Naive thymus-derived CD4-positive, alpha-beta T cell (primary cell): ENCODE measurements at regions of chr9 and their contacts with region 1.

Region 1: GRCh38 chr9:126939821-126940221 is 25.2 kb downstream of the RALGPS1 start:
- DNase-seq: no peak
- ATAC-seq: no peak
- H3K4me3 ChIP-seq: no peak overlapping the region
- H3K4me3 Mint-ChIP-seq: no peak overlapping the region
- H3K27ac ChIP-seq: no peak overlapping the region
- H3K27ac Mint-ChIP-seq: no peak overlapping the region
- H3K4me1 ChIP-seq: no peaks in the 10 kb centered on the region
- H3K4me1 Mint-ChIP-seq: peaks cover 4 to 7% (median 5%) of the 10 kb centered on the region in 7 donors
- H3K27me3 ChIP-seq: no peaks in the 10 kb centered on the region
- H3K27me3 Mint-ChIP-seq: peaks cover 0 to 39% (median 22%) of the 10 kb centered on the region in 5 donors

Region 2: DNA sequence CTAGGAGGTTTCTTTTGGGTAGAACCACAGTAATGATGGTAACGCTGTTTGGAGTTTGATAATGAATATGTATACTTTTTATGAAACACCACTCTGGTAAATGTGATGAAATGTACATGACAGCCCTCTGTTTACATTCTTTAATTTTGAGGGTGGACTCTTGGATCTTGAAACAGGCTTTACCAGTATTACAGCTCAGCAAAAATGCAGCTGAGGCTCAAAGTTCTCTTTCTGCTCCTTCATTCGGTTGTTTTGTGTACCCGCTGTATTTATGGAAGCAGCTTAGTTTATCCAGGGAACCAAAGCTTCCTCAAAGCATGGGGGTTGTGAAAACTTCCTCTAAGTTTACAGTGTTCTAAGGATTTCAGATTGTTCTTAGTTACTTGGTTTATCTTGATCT is 1667.1 kb before region 1 on chr9:
- CTCF ChIA-PET with region 1: no interaction called
- POLR2A ChIA-PET with region 1: no interaction called
- intact Hi-C with region 1: no loop called
- DNase-seq: no peak
- ATAC-seq: no peak
- H3K4me3 ChIP-seq: no peak overlapping the region
- H3K4me3 Mint-ChIP-seq: peak overlapping the region in 3 of 10 donors; percentile 2 to 30 (median 25)
- H3K27ac ChIP-seq: no peak overlapping the region
- H3K27ac Mint-ChIP-seq: peak overlapping the region in 1 of 9 donors; percentile 20
- H3K4me1 ChIP-seq: peaks cover 0 to 6% of the 10 kb centered on the region in 2 donors
- H3K4me1 Mint-ChIP-seq: peaks cover 15 to 56% (median 44%) of the 10 kb centered on the region in 7 donors
- H3K27me3 ChIP-seq: no peaks in the 10 kb centered on the region
- H3K27me3 Mint-ChIP-seq: no peaks in the 10 kb centered on the region

Region 3: DNA sequence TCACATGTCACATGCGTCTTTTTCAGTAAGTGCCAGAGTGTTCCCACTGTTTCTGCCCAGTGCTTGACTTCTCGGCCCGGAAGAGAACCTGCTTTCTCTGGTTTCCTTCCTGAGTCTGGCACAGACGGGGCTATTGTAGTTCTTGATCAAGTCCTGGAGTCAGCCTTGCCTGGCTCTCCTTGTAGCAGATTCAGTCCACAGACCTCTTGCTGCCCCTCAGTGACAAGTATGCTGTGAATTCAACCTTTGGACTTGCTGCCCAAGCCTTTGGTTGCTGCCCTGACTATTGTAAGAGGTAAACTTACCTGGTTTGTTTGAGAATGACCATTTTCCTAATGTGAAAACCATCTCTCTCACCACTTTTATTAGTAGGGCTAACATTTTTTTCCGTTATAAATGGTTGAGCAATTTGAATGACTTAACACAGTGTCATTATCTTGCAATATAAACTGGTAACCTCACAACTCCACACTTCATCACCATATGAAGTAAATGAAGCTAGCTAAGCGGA is 54.6 kb before region 1 on chr9:
- CTCF ChIA-PET with region 1: no interaction called
- POLR2A ChIA-PET with region 1: no interaction called
- intact Hi-C with region 1: no loop called
- DNase-seq: no peak
- ATAC-seq: peak; percentile 37
- H3K4me3 ChIP-seq: no peak overlapping the region
- H3K4me3 Mint-ChIP-seq: no peak overlapping the region
- H3K27ac ChIP-seq: no peak overlapping the region
- H3K27ac Mint-ChIP-seq: no peak overlapping the region
- H3K4me1 ChIP-seq: no peaks in the 10 kb centered on the region
- H3K4me1 Mint-ChIP-seq: peaks cover 0 to 7% (median 2%) of the 10 kb centered on the region in 7 donors
- H3K27me3 ChIP-seq: no peaks in the 10 kb centered on the region
- H3K27me3 Mint-ChIP-seq: no peaks in the 10 kb centered on the region

Region 4: DNA sequence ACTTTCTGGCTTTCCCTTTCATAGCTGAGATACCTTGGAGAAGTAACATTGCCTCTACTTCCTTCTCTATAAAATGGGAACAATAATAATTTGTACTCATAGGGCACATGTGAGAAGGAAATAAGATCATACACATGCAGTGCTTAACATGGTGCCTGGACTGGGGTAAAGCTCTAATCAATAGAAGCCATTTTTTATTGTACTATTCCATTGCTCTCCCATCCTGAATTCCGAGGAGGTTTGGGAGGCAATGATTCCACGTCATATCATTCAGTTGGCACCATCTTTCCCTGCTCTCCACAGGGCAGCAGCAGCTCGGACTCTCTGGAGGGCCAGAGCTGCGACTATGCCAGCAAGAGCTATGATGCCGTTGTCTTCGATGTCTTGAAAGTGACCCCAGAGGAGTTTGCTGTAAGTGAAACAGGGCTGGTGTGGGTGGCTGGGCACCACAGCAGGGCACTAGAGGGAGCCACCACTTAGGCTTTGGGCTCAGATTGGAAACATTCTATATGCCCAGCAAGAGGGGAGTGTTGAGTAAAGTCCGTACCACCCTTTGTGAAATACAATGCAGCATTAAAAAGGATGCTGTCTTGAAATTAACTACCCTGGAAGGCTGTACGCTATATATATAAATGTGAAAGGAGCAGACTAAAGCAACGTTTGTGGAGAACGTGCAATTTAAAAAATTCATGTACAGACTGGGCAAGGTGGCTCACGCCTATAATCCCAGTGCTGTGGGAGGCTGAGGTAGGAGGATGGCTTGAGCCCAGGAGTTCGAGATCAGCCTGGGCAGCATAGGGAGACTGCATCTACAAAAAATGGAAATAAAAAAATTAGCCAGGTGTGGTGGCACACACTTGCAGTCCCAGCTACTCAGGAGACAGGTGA is 26.0 kb after region 1 on chr9:
- CTCF ChIA-PET with region 1: interaction called, 14 read pairs
- POLR2A ChIA-PET with region 1: no interaction called
- intact Hi-C with region 1: loop called in 1 of 2 experiments (anchors 1 kb)
- DNase-seq: peak in 8 of 9 donors; percentile 18 to 60 (median 46)
- ATAC-seq: peak; percentile 76
- H3K4me3 ChIP-seq: no peak overlapping the region
- H3K4me3 Mint-ChIP-seq: no peak overlapping the region
- H3K27ac ChIP-seq: no peak overlapping the region
- H3K27ac Mint-ChIP-seq: no peak overlapping the region
- H3K4me1 ChIP-seq: no peaks in the 10 kb centered on the region
- H3K4me1 Mint-ChIP-seq: peaks cover 2 to 12% (median 7%) of the 10 kb centered on the region in 7 donors
- H3K27me3 ChIP-seq: no peaks in the 10 kb centered on the region
- H3K27me3 Mint-ChIP-seq: peaks cover 14 to 30% (median 25%) of the 10 kb centered on the region in 5 donors

Region 5: GRCh38 chr9:127199001-127199791 is 259.4 kb after region 1 on chr9:
- CTCF ChIA-PET with region 1: interaction called, 96 read pairs
- POLR2A ChIA-PET with region 1: no interaction called
- intact Hi-C with region 1: loop called (anchors 1 kb)
- DNase-seq: peak; percentile 56 to 78 (median 69)
- ATAC-seq: peak; percentile 86
- H3K4me3 ChIP-seq: no peak overlapping the region
- H3K4me3 Mint-ChIP-seq: no peak overlapping the region
- H3K27ac ChIP-seq: no peak overlapping the region
- H3K27ac Mint-ChIP-seq: no peak overlapping the region
- H3K4me1 ChIP-seq: peaks cover 0 to 5% of the 10 kb centered on the region in 2 donors
- H3K4me1 Mint-ChIP-seq: peaks cover 9 to 17% (median 13%) of the 10 kb centered on the region in 7 donors
- H3K27me3 ChIP-seq: no peaks in the 10 kb centered on the region
- H3K27me3 Mint-ChIP-seq: peaks cover 0 to 26% (median 2%) of the 10 kb centered on the region in 5 donors

Region 6: GRCh38 chr9:127311239-127311741 is 371.5 kb after region 1 on chr9:
- CTCF ChIA-PET with region 1: no interaction called
- POLR2A ChIA-PET with region 1: no interaction called
- intact Hi-C with region 1: loop called in 1 of 2 experiments (anchors 5 kb)
- DNase-seq: peak in 5 of 9 donors; percentile 11 to 42 (median 26)
- ATAC-seq: no peak
- H3K4me3 ChIP-seq: no peak overlapping the region
- H3K4me3 Mint-ChIP-seq: no peak overlapping the region
- H3K27ac ChIP-seq: no peak overlapping the region
- H3K27ac Mint-ChIP-seq: no peak overlapping the region
- H3K4me1 ChIP-seq: no peaks in the 10 kb centered on the region
- H3K4me1 Mint-ChIP-seq: no peaks in the 10 kb centered on the region
- H3K27me3 ChIP-seq: peaks cover 0 to 4% of the 10 kb centered on the region in 2 donors
- H3K27me3 Mint-ChIP-seq: peaks cover 15 to 32% (median 31%) of the 10 kb centered on the region in 5 donors

Region 7: GRCh38 chr9:127503947-127504782 is 564.3 kb after region 1 on chr9:
- CTCF ChIA-PET with region 1: no interaction called
- POLR2A ChIA-PET with region 1: no interaction called
- intact Hi-C with region 1: loop called in 1 of 2 experiments (anchors 1 kb)
- DNase-seq: peak; percentile 65 to 81 (median 75)
- ATAC-seq: peak; percentile 87
- H3K4me3 ChIP-seq: no peak overlapping the region
- H3K4me3 Mint-ChIP-seq: no peak overlapping the region
- H3K27ac ChIP-seq: no peak overlapping the region
- H3K27ac Mint-ChIP-seq: peak overlapping the region in 1 of 9 donors; percentile 69
- H3K4me1 ChIP-seq: no peaks in the 10 kb centered on the region
- H3K4me1 Mint-ChIP-seq: peaks cover 0 to 4% (median 0%) of the 10 kb centered on the region in 7 donors
- H3K27me3 ChIP-seq: no peaks in the 10 kb centered on the region
- H3K27me3 Mint-ChIP-seq: no peaks in the 10 kb centered on the region

Region 8: DNA sequence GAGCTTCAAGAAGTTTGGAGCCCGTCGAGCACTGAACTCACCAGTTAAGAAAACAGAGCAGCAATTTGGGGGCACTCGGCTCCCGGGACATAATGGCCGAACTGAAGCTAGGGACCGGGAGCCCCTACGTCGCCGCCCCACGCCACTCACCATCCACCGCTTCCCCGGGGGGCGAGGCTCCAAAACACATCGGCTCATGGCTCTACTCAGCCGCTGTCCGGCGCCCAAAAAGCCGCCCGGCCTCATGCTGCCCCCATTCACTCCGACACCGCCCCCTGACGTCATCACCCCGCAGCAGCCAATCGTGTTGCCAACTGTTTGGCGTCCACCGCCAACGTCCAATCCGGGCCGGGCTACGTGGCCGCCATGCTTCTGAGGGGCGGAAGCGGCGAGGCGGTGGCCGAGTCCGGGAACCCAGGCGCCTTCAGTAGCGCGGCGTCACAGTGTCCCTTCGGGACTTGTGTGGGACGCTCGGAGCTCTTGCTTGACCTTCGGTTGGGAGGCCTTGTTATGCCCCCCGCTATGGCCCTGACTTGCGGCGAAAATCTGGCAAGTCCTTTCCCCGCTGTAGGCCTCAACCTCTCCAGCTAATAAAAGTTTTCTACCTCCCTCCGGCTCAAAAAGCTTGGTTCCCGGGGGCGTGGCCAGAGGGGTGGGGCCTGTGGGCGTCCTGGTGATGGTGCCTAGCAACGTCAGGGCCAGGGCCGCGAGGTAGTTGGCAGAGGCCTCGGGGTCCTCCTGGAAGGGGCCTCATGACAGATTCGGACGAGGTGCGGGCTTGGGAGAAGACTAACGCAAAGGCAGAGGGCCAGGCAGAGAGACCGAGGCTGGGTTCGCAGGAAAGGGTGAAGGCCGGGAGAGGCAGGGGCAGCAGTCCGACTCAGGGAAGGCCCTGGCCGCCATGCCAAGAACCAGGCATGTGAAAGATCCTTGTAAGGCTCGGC is 775.8 kb after region 1 on chr9 and contains the starts of genes PTRH1 and TTC16:
- CTCF ChIA-PET with region 1: no interaction called
- POLR2A ChIA-PET with region 1: no interaction called
- intact Hi-C with region 1: no loop called
- DNase-seq: peak; percentile 91 to 98 (median 96)
- ATAC-seq: peak; percentile 96
- H3K4me3 ChIP-seq: peak within 1 kb of the TSS; percentile 85
- H3K4me3 Mint-ChIP-seq: peak within 1 kb of the TSS; percentile 93 to 100 (median 98)
- H3K27ac ChIP-seq: peak within 1 kb of the TSS; percentile 89
- H3K27ac Mint-ChIP-seq: peak within 1 kb of the TSS; percentile 86 to 99 (median 97)
- H3K4me1 ChIP-seq: peaks cover 31 to 32% of the 10 kb centered on the region in 2 donors
- H3K4me1 Mint-ChIP-seq: peaks cover 28 to 47% (median 30%) of the 10 kb centered on the region in 7 donors
- H3K27me3 ChIP-seq: no peaks in the 10 kb centered on the region
- H3K27me3 Mint-ChIP-seq: no peaks in the 10 kb centered on the region
- total RNA-seq, gene PTRH1: 7.8 to 9.5 (median 8.6) TPM
- total RNA-seq, gene TTC16: 0.29 to 9.9 (median 4.6) TPM